ENCODE measurements at regions of chr15 and their contacts with region 1.

Region 1: GRCh38 chr15:89206908-89207331 is 14.5 kb downstream of the RLBP1 start:
- DNase-seq: peak; percentile 81
- ATAC-seq: peak; percentile 79
- H3K4me3 Mint-ChIP-seq: no peak overlapping the region
- H3K27ac Mint-ChIP-seq: no peak overlapping the region
- H3K4me1 Mint-ChIP-seq: peaks cover 31% of the 10 kb centered on the region
- H3K27me3 Mint-ChIP-seq: no peaks in the 10 kb centered on the region
- CTCF ChIP-seq: peak; percentile 99

Region 2: GRCh38 chr15:89150762-89151664 is 55.9 kb before region 1 on chr15:
- CTCF ChIA-PET with region 1: interaction called, 11 read pairs
- POLR2A ChIA-PET with region 1: no interaction called
- intact Hi-C with region 1: no loop called
- DNase-seq: no peak
- ATAC-seq: no peak
- H3K4me3 Mint-ChIP-seq: no peak overlapping the region
- H3K27ac Mint-ChIP-seq: no peak overlapping the region
- H3K4me1 Mint-ChIP-seq: peaks cover 3% of the 10 kb centered on the region
- H3K27me3 Mint-ChIP-seq: no peaks in the 10 kb centered on the region
- CTCF ChIP-seq: no peak

Region 3: GRCh38 chr15:89187976-89188514 is 18.9 kb before region 1 on chr15:
- CTCF ChIA-PET with region 1: interaction called, 71 read pairs
- POLR2A ChIA-PET with region 1: no interaction called
- intact Hi-C with region 1: no loop called
- DNase-seq: no peak
- ATAC-seq: no peak
- H3K4me3 Mint-ChIP-seq: no peak overlapping the region
- H3K27ac Mint-ChIP-seq: no peak overlapping the region
- H3K4me1 Mint-ChIP-seq: peaks cover 3% of the 10 kb centered on the region
- H3K27me3 Mint-ChIP-seq: no peaks in the 10 kb centered on the region
- CTCF ChIP-seq: no peak

Region 4: DNA sequence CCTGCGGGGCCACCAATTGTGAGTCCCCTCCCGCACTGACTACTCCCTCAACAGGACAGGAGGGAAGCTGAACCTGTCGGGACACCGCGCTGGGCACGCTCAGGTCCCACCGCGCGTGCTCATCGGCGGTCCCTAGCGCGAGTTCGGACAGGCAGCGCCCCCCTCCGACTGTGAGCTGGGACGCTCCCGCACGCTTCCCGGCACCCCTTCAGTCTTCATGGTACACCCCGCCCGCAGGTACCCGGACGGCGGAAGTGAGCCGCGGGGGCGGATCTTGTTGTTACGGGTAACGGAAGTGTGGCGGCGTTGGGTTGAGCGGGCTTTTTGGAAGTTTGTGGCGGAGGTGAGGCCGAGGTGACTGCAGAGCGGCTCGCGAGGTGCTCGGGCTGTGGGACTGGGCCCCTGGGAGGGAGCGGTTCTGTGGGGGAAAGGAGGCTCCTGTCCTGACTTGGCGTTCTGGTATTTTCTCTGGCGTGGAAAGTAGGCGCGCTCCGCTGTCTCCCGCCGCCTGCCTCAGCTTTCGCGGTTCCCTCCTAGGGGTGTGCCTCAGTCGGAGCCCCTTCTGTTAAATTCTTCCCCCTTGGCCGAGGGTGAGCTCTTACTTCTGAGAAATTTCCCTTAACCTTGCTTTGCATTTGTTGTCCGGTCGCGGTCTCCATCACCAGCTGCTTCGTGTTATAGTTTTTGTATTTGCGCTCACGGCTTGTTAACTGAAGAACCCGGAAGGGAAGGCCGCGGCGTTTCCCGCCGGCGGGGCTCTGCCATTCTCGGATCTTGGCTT is 37.0 kb after region 1 on chr15 and contains the start of gene FANCI:
- CTCF ChIA-PET with region 1: interaction called, 82 read pairs
- POLR2A ChIA-PET with region 1: interaction called, 9 read pairs
- intact Hi-C with region 1: loop called (anchors 2 kb)
- DNase-seq: peak; percentile 99
- ATAC-seq: peak; percentile 96
- H3K4me3 Mint-ChIP-seq: peak within 1 kb of the TSS; percentile 96
- H3K27ac Mint-ChIP-seq: peak within 1 kb of the TSS; percentile 93
- H3K4me1 Mint-ChIP-seq: peaks cover 30% of the 10 kb centered on the region
- H3K27me3 Mint-ChIP-seq: no peaks in the 10 kb centered on the region
- CTCF ChIP-seq: no peak
- total RNA-seq, gene FANCI: 180 TPM

Region 5: DNA sequence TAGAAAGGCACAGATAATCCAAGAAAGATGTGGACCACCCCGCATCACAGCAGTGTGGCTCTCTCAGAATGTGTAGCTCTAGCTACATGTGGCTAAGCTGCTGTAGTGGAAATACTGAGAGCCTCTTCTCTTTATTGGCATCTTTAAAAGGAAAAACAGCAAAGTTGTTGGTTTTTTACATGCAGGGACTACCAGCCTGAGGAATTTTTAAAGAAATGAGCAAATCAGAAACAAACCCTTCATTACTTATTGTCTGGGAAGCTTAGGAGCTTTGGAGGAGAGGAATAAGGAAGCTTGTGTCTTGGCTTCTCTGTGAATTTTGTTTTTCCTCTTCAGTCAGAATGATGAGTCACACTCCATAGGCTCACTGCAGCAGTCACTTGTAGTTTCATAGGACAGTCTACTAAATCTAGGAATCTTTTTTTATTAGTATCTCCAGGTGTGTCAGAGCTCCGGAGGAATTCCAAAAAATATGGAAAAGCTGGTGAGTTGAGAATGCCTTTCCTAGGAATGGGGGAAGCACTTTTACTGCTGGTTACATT is 100.2 kb after region 1 on chr15:
- CTCF ChIA-PET with region 1: interaction called, 17 read pairs
- POLR2A ChIA-PET with region 1: no interaction called
- intact Hi-C with region 1: no loop called
- DNase-seq: no peak
- ATAC-seq: no peak
- H3K4me3 Mint-ChIP-seq: no peak overlapping the region
- H3K27ac Mint-ChIP-seq: no peak overlapping the region
- H3K4me1 Mint-ChIP-seq: peaks cover 6% of the 10 kb centered on the region
- H3K27me3 Mint-ChIP-seq: no peaks in the 10 kb centered on the region
- CTCF ChIP-seq: no peak

Region 6: DNA sequence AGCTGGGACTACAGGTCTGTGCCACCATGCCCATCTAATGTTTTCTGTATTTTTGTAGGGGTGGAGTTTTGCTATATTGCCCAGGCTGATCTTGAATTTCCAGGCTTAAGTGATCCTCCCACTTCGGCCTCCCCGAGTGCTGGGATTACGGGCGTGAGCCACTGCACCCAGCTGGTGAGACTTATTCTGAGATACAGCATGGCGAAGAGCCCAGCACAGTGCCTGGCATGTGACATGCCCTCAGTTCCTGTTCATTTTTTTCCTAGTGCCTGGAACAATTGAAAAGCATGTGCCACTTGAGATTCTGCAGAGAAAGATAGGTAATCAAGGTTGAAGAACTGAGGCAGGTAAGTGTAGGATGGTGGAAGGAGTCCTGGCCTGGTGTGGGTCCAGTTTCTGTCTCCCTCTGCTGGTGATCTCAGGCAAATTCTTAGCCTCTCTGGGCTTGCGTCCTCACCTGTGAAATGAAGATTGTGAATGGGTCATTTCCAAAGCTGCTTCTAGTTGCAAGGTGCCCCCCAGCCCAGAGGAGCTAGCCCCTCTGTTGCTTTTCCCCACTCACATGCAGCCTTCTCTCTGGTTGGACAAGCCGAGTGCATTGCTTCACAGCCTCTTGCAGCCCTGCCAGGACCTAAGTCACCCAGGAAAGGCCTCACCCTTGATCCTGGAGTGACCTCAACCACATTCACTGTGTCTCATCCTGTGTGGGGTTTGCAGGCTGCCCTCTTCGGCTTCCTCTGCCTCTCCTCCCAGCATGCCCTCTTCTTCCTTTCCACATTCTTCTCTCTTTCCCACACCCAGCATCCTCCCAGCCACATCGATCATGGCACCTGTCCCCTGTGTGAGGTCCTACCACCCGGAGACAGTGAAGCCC is 293.7 kb after region 1 on chr15:
- CTCF ChIA-PET with region 1: no interaction called
- POLR2A ChIA-PET with region 1: no interaction called
- intact Hi-C with region 1: no loop called
- DNase-seq: peak; percentile 17
- ATAC-seq: no peak
- H3K4me3 Mint-ChIP-seq: no peak overlapping the region
- H3K27ac Mint-ChIP-seq: no peak overlapping the region
- H3K4me1 Mint-ChIP-seq: peaks cover 8% of the 10 kb centered on the region
- H3K27me3 Mint-ChIP-seq: peaks cover 40% of the 10 kb centered on the region
- CTCF ChIP-seq: peak; percentile 17

Measured in activated CD8-positive, alpha-beta T cell treated with anti-CD3 and anti-CD28 coated beads for 36 hours (primary cell).